Activated CD4-positive, alpha-beta T cell treated with anti-CD3 and anti-CD28 coated beads, Interleukin-2, amount 10 ng/mL, durations not matched to agents 24 days and 14 days (primary cell): ENCODE measurements at regions of chr14 and their contacts with region 1.

Region 1: GRCh38 chr14:35808076-35808652 is 931 bp downstream of the RALGAPA1 start:
- DNase-seq: peak; percentile 70
- H3K4me3 Mint-ChIP-seq: peak overlapping the region; percentile 99
- H3K27ac Mint-ChIP-seq: peak overlapping the region; percentile 95
- H3K4me1 Mint-ChIP-seq: peaks cover 20% of the 10 kb centered on the region
- H3K27me3 Mint-ChIP-seq: peaks cover 1% of the 10 kb centered on the region

Region 2: DNA sequence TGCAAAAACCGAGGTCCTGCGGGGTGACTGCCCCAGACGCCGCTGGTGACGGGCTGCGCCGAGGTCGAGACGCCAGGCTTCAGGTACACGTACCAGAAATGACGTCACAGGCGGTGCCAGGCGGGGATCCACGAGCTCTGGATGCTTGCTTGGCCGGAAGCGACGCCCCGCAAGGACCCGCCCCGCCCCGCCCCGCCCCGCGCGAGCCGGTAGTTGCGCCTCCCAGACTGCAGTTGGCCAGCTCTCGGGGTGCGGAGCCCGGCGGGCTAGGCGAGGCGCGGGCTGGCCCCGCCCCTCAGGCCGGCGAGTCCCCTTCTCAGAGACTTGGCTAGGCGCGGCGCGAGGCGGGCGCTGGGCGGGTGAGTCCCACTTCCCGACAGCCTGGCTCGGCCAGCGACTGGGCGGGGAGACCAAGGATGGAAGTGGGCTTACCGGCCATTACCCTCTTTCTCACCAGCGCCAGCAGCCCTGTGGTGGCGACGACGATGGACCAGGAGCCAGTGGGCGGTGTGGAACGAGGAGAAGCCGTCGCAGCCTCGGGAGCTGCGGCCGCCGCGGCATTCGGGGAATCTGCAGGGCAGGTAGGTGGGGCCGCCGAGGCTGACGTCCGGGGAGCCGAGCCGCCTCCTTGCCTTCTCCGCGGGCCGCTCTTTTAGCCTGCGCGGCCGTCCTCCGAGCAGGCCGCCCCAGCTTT is 762.0 kb before region 1 on chr14 and contains the start of gene FAM177A1:
- intact Hi-C with region 1: loop called (anchors 5 kb)
- DNase-seq: peak; percentile 99
- H3K4me3 Mint-ChIP-seq: peak within 1 kb of the TSS; percentile 96
- H3K27ac Mint-ChIP-seq: peak within 1 kb of the TSS; percentile 99
- H3K4me1 Mint-ChIP-seq: peaks cover 28% of the 10 kb centered on the region
- H3K27me3 Mint-ChIP-seq: no peaks in the 10 kb centered on the region
- total RNA-seq, gene FAM177A1: 37.9 and 41.6 TPM in 2 replicates

Region 3: DNA sequence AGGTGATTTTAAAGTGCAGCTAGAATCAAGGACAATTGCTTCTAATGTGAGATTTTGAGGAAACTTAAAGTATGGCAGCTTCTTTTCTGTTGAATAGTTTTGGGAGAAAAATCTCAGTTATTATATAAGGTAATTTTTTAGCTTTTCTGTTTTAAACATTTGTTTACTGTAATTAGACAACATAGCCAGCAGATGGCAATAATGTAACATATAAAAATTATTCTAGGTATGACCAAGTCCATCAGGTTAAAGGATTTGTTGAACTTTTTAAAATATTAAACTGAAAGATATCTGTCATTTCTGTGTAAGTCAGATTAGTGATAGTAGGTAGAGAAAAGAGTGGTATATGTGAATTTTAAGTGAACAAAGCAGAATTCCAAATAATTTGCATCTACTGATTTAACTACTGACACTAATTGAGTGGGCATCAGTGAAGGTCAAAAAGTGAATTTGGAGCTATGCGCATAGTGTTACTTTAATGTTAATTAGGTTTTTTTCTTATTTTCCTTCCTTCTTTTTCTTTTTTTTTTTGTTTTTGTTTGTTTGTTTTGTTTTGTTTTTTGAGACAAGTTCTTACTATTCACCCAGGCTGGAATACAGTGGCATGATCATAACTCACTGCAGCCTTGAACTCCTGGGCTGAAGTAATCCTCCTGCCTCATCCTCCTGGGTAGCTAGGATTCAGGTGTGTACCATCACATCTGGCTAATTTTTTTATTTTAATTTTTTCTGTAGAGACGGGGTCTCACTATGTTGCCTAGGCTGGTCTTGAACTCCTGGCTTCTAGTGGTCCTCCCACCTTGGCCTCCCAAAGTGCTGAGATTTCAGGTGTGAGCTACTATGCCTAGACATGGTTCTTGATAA is 667.2 kb before region 1 on chr14:
- intact Hi-C with region 1: loop called (anchors 5 kb)
- DNase-seq: no peak
- H3K4me3 Mint-ChIP-seq: no peak overlapping the region
- H3K27ac Mint-ChIP-seq: no peak overlapping the region
- H3K4me1 Mint-ChIP-seq: peaks cover 19% of the 10 kb centered on the region
- H3K27me3 Mint-ChIP-seq: no peaks in the 10 kb centered on the region

Region 4: GRCh38 chr14:35533357-35534207 is 274.6 kb before region 1 on chr14 and contains the start of gene INSM2:
- intact Hi-C with region 1: loop called (anchors 2 kb)
- DNase-seq: peak; percentile 90
- H3K4me3 Mint-ChIP-seq: peak within 1 kb of the TSS; percentile 74
- H3K27ac Mint-ChIP-seq: no peak within 1 kb of the TSS
- H3K4me1 Mint-ChIP-seq: peaks cover 8% of the 10 kb centered on the region
- H3K27me3 Mint-ChIP-seq: peaks cover 66% of the 10 kb centered on the region
- total RNA-seq, gene INSM2: not detected in 2 replicates

Region 5: DNA sequence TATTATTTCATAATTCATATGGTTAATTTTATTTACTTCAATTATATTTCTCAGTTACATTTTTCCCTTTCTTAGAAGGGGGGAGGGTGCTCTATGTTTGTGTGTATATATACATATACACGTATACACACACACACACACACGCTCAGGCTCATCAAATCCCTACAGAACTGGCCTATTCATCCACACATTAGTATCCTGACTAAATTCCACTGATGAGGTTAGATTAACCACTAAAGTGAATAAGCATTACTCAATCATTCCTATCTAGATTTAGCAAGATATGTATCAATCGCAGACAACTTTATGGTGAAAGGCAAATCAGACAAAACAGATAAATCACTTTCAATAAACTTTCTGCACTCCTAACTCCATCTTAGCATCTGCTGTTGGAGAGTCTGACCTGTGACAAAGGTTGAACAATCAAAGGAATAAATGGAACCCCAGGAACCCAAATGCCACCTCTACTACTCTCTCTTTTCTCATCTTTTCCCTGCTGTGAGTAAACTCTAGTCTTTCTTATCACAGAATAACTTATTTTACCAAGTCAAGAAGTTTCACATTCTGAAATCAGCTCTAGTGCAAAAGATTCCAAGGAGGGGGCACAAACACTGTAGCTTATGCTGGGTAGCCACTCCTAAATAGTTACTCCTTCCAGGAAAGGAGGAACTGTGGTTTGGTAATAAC is 66.7 kb before region 1 on chr14:
- intact Hi-C with region 1: loop called (anchors 5 kb)
- DNase-seq: no peak
- H3K4me3 Mint-ChIP-seq: peak overlapping the region; percentile 1
- H3K27ac Mint-ChIP-seq: peak overlapping the region; percentile 35
- H3K4me1 Mint-ChIP-seq: peaks cover 16% of the 10 kb centered on the region
- H3K27me3 Mint-ChIP-seq: no peaks in the 10 kb centered on the region

Region 6: DNA sequence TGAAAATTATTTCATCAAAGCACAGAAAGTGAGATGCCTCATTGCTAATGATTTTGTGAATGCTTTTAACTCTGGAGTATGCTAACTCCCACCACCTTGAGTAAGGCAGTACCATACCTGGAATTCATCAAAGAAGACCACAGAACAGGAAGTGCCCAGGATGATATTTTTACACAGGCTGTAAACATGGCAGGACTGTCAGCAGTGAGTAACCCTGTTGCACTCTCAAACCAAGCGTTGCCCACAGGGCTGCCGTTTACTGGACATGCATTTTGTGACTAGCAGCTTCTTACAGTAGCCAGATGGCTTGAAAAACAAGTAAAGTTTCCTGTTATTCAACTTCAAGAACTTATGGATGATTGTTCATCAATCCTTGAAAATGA is 41.5 kb before region 1 on chr14:
- intact Hi-C with region 1: no loop called
- DNase-seq: peak; percentile 64
- H3K4me3 Mint-ChIP-seq: peak overlapping the region; percentile 41
- H3K27ac Mint-ChIP-seq: no peak overlapping the region
- H3K4me1 Mint-ChIP-seq: peaks cover 12% of the 10 kb centered on the region
- H3K27me3 Mint-ChIP-seq: no peaks in the 10 kb centered on the region

Region 7: GRCh38 chr14:35826218-35826951 is 18.2 kb after region 1 on chr14 and contains the start of gene BRMS1L:
- intact Hi-C with region 1: loop called (anchors 1 kb)
- DNase-seq: peak; percentile 99
- H3K4me3 Mint-ChIP-seq: peak within 1 kb of the TSS; percentile 93
- H3K27ac Mint-ChIP-seq: peak within 1 kb of the TSS; percentile 93
- H3K4me1 Mint-ChIP-seq: peaks cover 25% of the 10 kb centered on the region
- H3K27me3 Mint-ChIP-seq: peaks cover 2% of the 10 kb centered on the region
- total RNA-seq, gene BRMS1L: 6.0 and 8.2 TPM in 2 replicates